ENCODE measurements at regions of chr11 and their contacts with region 1.

Region 1: DNA sequence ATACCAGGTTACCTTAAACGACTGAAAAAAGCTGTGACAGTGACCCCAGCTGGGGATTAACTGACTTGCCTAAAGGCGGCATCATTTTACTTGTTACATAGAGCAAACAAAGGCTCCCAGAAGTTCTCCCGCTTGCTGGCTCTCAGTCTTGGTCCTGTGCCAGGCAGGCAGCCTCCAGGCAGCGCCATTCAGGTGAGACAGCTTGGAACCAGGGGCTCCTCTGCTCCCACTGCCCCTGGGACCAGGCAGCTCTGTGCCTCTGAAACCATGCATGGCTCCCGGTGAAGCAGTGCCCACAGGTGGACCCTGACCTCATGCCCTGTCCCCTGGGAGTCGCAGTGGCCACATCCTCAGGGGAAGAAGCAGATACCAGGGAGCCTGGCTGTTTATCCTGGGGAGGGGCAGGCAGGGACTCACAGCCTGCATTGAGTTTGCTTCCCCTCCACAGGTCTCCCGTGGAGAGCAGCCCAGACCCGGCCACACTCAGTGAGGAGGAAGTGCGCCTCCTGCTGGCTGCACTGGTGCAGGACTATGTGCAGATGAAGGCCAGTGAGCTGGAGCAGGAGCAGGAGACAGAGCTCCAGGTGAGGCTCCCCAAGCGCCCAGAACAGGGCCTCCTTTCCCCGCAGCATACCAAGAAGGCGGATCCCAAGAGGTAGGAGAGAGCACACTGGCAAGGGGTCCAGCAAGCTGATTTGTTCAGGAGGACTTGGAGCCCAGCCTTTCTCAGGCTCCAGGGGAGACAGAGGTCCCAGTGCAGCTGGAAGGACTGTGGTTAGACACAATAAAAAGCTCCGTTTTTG is 15.6 kb upstream of the CYP2R1 start:
- DNase-seq: peak; percentile 27
- H3K4me3 ChIP-seq: no peak overlapping the region
- H3K27ac ChIP-seq: no peak overlapping the region
- H3K4me1 ChIP-seq: no peaks in the 10 kb centered on the region
- H3K27me3 ChIP-seq: no peaks in the 10 kb centered on the region
- CTCF ChIP-seq: peak; percentile 61 to 75

Region 2: GRCh38 chr11:14537134-14537599 is 370.4 kb before region 1 on chr11:
- CTCF ChIA-PET with region 1: interaction called, 5 read pairs
- dilution Hi-C with region 1: no loop called
- in situ Hi-C with region 1: no loop called
- intact Hi-C with region 1: loop called (anchors 1 kb)
- DNase-seq: peak; percentile 5
- H3K4me3 ChIP-seq: no peak overlapping the region
- H3K27ac ChIP-seq: no peak overlapping the region
- H3K4me1 ChIP-seq: no peaks in the 10 kb centered on the region
- H3K27me3 ChIP-seq: peaks cover 3% of the 10 kb centered on the region
- CTCF ChIP-seq: peak; percentile 75

Region 3: DNA sequence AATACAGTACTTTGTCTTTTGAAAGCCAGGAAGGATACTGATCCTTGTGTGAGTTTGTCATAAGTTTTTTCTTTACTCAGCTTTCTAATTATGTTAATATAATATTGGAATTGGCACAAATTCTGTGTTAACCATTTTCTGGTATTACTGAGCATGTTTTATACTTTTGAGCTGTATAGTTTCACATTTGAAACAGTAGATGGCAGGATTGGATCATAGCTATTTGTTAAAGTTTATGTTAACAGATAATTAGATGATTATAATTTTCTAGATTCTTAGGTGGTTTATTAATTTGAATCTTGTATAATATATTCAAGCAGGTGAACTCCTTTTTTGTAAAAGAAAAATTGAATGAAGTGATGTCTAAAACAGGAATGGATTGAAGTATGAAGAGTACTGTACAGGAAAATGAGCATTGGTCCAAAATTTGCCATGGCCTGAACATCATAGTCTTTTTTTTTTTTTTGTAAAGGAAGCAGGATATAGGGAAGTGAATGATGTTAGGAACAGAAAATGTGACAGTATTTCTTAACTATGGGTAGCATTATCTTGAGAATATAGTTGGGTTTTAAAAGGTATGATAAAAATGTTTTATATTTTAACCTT is 117.6 kb before region 1 on chr11:
- CTCF ChIA-PET with region 1: interaction called, 49 read pairs
- dilution Hi-C with region 1: no loop called
- in situ Hi-C with region 1: loop called (anchors 5 kb)
- intact Hi-C with region 1: loop called (anchors 1 kb)
- DNase-seq: no peak
- H3K4me3 ChIP-seq: no peak overlapping the region
- H3K27ac ChIP-seq: no peak overlapping the region
- H3K4me1 ChIP-seq: no peaks in the 10 kb centered on the region
- H3K27me3 ChIP-seq: peaks cover 4% of the 10 kb centered on the region
- CTCF ChIP-seq: peak; percentile 35 to 63

Region 4: GRCh38 chr11:14942745-14943144 is 35.1 kb after region 1 on chr11:
- CTCF ChIA-PET with region 1: no interaction called
- dilution Hi-C with region 1: no loop called
- in situ Hi-C with region 1: no loop called
- intact Hi-C with region 1: no loop called
- DNase-seq: no peak
- H3K4me3 ChIP-seq: no peak overlapping the region
- H3K27ac ChIP-seq: no peak overlapping the region
- H3K4me1 ChIP-seq: no peaks in the 10 kb centered on the region
- H3K27me3 ChIP-seq: no peaks in the 10 kb centered on the region
- CTCF ChIP-seq: no peak

Region 5: DNA sequence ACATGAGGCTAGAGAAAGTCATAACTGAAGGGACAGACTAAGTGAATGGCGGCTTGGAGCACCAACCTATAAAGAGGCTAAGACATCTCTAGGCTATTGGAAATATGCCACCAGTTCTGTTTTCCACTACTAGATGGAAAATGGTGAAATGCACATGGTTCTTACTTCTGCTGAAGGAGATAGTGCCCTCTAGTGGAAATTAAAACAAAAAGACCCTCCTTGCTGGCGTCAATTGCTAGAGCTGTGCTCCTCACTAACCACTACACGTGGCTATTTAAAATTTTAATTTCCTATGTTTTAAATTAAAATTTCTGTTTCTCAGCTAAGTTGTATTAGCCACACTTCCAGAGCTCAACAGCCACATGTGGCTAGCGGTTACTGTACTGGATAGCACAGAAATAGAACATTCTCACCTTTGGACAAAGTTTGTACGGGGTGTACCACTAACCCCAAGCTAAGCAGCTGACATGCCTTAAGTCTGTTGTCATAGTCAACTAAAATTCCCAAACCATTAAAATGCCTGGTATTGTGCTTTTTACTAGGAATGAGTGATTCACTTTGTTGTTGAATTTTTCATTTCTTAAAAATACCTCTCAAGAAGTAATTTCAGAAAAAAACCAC is 98.6 kb after region 1 on chr11:
- CTCF ChIA-PET with region 1: interaction called, 17 read pairs
- dilution Hi-C with region 1: no loop called
- in situ Hi-C with region 1: no loop called
- intact Hi-C with region 1: loop called (anchors 1 kb)
- DNase-seq: peak; percentile 26
- H3K4me3 ChIP-seq: no peak overlapping the region
- H3K27ac ChIP-seq: no peak overlapping the region
- H3K4me1 ChIP-seq: no peaks in the 10 kb centered on the region
- H3K27me3 ChIP-seq: peaks cover 17% of the 10 kb centered on the region
- CTCF ChIP-seq: peak; percentile 47 to 59

Region 6: DNA sequence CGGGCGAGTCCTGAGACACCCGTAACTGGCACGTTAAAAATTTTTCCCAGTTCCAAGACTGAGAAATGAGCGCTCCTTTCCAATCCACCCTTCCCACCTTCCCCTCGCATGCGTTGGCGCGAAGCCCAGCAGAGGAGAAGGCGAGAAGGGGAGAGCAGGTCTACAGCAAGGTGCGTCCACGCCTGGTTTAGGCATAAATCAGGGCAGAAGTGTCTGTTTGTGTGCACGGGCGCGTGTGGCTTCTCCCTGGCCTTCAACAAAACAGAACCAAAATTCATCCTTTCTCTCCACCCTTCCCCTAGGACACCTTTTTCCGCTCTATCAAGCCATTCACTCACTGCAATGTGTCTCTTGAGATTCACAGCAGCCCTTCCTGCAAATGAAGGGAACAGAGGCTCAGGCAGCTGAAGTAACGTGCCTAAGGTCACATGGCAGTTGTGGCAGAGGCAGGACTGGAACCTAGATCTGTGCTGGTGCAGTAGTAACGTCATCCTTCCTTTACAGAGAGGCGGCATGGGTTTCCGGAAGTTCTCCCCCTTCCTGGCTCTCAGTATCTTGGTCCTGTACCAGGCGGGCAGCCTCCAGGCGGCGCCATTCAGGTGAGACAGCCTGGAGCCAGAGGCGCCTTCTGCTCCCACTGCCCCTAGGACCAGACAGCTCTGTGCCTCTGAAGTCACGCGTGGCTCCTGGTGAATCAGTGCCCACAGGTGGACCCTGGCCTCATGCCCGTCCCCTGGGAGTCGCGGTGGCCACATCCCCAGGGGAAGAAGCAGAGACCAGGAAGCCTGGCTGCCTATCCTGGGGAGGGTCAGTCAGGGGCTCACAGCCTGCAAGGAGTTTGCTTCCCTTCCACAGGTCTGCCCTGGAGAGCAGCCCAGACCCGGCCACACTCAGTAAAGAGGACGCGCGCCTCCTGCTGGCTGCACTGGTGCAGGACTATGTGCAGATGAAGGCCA is 166.9 kb after region 1 on chr11:
- CTCF ChIA-PET with region 1: interaction called, 8 read pairs
- dilution Hi-C with region 1: no loop called
- in situ Hi-C with region 1: loop called (anchors 10 kb)
- intact Hi-C with region 1: loop called (anchors 1 kb)
- DNase-seq: peak; percentile 68
- H3K4me3 ChIP-seq: peak overlapping the region in 2 of 3 experiments; percentile 6 to 26
- H3K27ac ChIP-seq: no peak overlapping the region
- H3K4me1 ChIP-seq: peaks cover 16% of the 10 kb centered on the region
- H3K27me3 ChIP-seq: peaks cover 6% of the 10 kb centered on the region
- CTCF ChIP-seq: peak; percentile 76 to 85

Region 7: DNA sequence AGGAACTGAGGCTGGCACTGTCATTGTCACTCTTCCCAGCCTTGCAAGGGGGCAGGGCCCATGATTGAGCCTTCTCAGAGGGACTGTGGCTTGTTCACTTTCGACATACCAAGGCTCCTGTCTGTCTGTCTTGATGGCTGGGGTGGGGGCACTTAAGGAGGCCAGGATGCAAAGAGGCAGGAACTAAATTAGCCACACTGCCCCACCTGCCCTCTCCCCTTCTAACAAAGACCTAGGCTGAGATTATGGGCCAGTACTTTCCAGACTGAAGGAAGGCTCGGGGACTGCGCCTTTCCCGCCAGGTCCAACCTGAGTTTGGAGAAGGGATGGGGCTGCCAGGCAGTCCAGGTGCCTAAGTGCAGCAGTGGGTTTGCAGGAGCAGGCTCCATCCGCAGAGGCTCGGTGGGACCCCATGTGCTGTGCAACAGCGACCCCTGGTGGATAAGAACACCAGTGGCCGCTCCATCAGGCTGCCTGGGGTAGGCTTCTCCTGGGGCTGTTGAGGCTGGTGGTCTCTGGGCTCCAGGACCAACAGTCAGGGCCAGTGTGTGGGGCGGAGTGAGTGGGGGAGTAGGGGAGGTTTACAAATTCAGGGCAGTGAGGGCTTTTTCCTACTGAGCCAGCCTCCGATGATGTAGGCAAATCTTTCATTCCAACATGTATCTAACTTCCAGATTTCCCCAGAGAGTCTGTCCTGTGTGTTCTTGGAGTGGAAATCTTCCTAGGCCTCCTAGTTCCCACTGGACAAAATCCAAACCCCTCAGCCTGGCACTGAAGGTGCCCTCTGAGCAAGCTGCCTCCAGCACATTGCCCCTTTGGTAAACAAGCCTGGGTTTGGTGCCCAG is 301.0 kb after region 1 on chr11:
- CTCF ChIA-PET with region 1: interaction called, 3 read pairs
- dilution Hi-C with region 1: no loop called
- in situ Hi-C with region 1: no loop called
- intact Hi-C with region 1: loop called (anchors 1 kb)
- DNase-seq: peak; percentile 27
- H3K4me3 ChIP-seq: no peak overlapping the region
- H3K27ac ChIP-seq: no peak overlapping the region
- H3K4me1 ChIP-seq: no peaks in the 10 kb centered on the region
- H3K27me3 ChIP-seq: no peaks in the 10 kb centered on the region
- CTCF ChIP-seq: peak; percentile 80 to 94

Measured in mammary epithelial cell (primary cell).